ENCODE measurements at regions of chr13 and their contacts with region 1.

Region 1: DNA sequence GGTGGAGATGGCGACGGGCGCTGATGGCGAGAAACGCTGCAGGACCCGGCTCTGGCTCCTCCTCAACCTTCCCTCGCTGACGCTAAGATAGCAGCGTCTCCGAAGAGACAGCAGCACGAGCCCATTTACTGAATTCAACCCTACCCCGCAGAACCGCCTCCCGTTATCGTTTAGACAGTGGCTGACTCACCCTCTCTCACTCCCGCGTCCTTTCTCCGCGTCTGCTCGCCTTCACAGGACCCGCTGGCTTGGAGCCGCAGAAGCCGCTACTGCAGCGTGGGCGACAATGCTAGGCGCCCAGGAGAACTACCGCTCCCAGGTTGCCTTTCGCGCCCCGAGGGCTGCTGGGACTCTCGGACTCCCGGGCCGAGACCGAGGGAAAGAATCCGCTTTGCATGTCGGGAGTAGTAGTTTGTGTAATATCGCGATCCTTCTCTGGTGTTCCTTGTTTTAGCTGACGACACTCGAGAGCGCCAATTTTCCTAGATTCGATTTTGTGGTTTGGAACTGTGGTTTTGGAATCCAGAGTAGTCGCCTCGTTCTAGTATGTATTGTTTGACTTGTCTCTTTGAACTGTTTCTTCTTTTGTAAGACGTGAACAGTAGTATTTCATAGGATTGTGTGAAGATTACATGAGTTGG is at the start of gene KBTBD6:
- DNase-seq: peak; percentile 96
- ATAC-seq: peak; percentile 99
- H3K4me3 ChIP-seq: peak within 1 kb of the TSS; percentile 74 to 75
- H3K27ac ChIP-seq: peak within 1 kb of the TSS; percentile 65
- H3K4me1 ChIP-seq: peaks cover 2 to 25% of the 10 kb centered on the region in 2 experiments; a peak in 3 of 4 replicates
- H3K27me3 ChIP-seq: no peaks in the 10 kb centered on the region
- CTCF ChIP-seq: no peak
- POLR2A ChIP-seq: peak; percentile 73
- RAD21 ChIP-seq: no peak
- total RNA-seq, gene KBTBD6: 9.1 TPM

Region 2: DNA sequence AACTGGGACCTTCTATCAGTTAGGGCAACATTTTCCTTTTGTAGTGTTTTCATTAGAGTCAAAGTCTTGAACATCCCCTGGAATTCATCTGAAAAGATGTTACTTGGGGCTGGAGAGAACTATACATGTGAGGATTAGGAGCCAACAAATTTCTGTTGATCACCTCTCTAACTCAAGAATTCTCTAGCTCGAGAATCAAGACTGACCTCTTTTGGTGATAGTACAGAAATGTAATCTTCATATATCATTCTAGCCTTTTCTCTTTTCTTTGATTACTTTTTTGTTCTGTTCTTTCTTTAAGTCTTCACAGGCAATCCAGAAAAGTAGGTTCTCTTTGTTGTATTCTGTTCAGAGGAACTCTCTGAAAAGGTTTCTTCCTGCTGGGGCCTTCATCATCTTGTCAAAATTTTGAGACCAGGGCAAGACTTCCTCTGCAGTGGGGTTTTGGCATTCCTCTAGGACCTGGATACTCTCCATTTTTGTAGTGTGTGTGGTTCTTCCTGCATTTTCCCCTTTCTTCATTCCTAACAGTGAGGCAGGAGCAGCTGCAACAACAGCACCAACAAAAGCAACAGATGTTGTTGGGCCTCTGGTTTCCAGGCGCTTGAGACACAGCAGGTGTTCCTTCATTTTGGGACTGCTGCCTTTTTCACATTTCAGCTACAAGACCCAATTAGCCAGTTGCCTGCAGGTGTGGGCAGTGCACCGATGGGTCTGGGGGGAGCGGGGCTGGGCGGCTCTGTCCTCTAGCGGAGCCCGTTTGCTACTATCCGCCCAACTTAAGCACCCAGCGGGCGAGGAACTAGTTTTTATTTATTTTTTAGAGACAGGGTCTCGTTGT is 139.7 kb before region 1 on chr13:
- CTCF ChIA-PET with region 1: no interaction called
- POLR2A ChIA-PET with region 1: no interaction called
- RAD21 ChIA-PET with region 1: no interaction called
- intact Hi-C with region 1: no loop called
- DNase-seq: no peak
- ATAC-seq: no peak
- H3K4me3 ChIP-seq: no peak overlapping the region; a peak in 1 of 4 replicates
- H3K27ac ChIP-seq: peak overlapping the region; percentile 77
- H3K4me1 ChIP-seq: peaks cover 35% of the 10 kb centered on the region in 2 experiments
- H3K27me3 ChIP-seq: no peaks in the 10 kb centered on the region
- CTCF ChIP-seq: peak in 1 of 3 experiments; percentile 12; a peak in 2 of 6 replicates
- POLR2A ChIP-seq: no peak
- RAD21 ChIP-seq: peak; percentile 45

Region 3: DNA sequence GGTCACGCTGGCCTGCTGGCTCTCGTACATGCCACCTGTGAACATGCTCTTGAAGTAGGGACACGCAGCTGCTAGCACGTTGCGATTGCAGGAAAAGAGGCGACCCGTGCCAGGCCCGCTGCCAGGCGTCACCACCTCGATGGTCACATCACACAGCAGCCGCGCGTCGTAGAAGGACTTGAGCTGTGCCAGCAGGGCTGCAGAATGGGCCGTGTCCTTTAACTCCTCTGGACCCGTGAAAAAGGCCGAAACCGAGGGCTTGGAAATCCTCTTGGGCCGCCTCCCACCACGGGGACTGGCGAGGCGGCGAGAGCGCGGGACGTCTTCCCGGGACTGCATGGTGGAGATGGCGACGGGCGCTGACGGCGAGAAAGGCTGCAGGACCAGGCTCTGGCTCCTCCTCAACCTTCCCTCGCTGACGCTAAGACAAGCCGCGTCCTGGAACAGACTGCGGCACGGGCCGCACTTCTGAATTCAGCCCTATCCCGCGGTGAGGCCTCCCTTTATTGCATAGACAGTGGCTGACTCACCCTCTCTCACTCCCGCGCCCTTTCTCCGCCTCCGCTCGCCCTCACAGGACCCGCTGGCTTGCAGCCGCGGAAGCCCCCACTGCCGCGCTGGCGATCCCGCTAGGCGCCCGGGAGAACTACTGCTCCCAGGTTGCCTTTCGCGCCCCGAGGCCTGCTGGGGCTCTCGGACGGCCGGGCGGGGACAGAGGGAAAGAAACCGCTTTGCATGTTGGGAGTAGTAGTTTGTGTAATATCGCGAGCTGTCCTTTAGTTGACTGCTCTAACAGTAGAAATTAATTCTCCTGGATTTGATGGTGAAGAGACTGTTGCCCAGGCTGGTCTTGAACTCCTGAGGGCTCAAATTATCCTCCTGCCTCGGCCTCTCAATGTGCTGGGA is 61.5 kb after region 1 on chr13 and contains the start of gene KBTBD7:
- CTCF ChIA-PET with region 1: no interaction called
- POLR2A ChIA-PET with region 1: no interaction called
- RAD21 ChIA-PET with region 1: no interaction called
- intact Hi-C with region 1: loop called (anchors 1 kb)
- DNase-seq: peak; percentile 79
- ATAC-seq: peak; percentile 98
- H3K4me3 ChIP-seq: peak within 1 kb of the TSS; percentile 68 to 69
- H3K27ac ChIP-seq: peak within 1 kb of the TSS; percentile 61
- H3K4me1 ChIP-seq: peaks cover 0 to 8% of the 10 kb centered on the region in 2 experiments; a peak in 1 of 4 replicates
- H3K27me3 ChIP-seq: no peaks in the 10 kb centered on the region
- CTCF ChIP-seq: no peak
- POLR2A ChIP-seq: no peak
- RAD21 ChIP-seq: no peak
- total RNA-seq, gene KBTBD7: 6.2 TPM